WTC11 (cell line): ENCODE measurements at regions of chr2 and their contacts with region 1.

Region 1: GRCh38 chr2:176653479-176654443 is 384.5 kb downstream of the MTX2 start:
- DNase-seq: peak; percentile 74
- ATAC-seq: peak; percentile 98
- H3K4me3 Mint-ChIP-seq: 0 out of 2 replicates have a peak overlapping the region, but pooled peaks have one; percentile 21
- H3K27ac Mint-ChIP-seq: no peak overlapping the region
- H3K4me1 Mint-ChIP-seq: peaks cover 39% of the 10 kb centered on the region
- H3K27me3 Mint-ChIP-seq: peaks cover 16% of the 10 kb centered on the region
- CTCF ChIP-seq: peak; percentile 91

Region 2: GRCh38 chr2:175207741-175208438 is 1445.9 kb before region 1 on chr2:
- CTCF ChIA-PET with region 1: no interaction called
- POLR2A ChIA-PET with region 1: no interaction called
- DNase-seq: no peak
- ATAC-seq: no peak
- H3K4me3 Mint-ChIP-seq: no peak overlapping the region
- H3K27ac Mint-ChIP-seq: no peak overlapping the region
- H3K4me1 Mint-ChIP-seq: peaks cover 3% of the 10 kb centered on the region; the same call in 1 of the 2 replicates
- H3K27me3 Mint-ChIP-seq: no peaks in the 10 kb centered on the region
- CTCF ChIP-seq: no peak

Region 3: GRCh38 chr2:176126929-176127773 is 526.6 kb before region 1 on chr2:
- CTCF ChIA-PET with region 1: interaction called, 12 read pairs
- POLR2A ChIA-PET with region 1: no interaction called
- DNase-seq: peak; percentile 69
- ATAC-seq: no peak
- H3K4me3 Mint-ChIP-seq: no peak overlapping the region
- H3K27ac Mint-ChIP-seq: no peak overlapping the region
- H3K4me1 Mint-ChIP-seq: peaks cover 23% of the 10 kb centered on the region
- H3K27me3 Mint-ChIP-seq: peaks cover 98% of the 10 kb centered on the region
- CTCF ChIP-seq: peak; percentile 82

Region 4: GRCh38 chr2:176554101-176555048 is 99.4 kb before region 1 on chr2:
- CTCF ChIA-PET with region 1: interaction called, 14 read pairs
- POLR2A ChIA-PET with region 1: no interaction called
- DNase-seq: no peak
- ATAC-seq: peak; percentile 35; the same call in 1 of the 2 replicates
- H3K4me3 Mint-ChIP-seq: peak overlapping the region; percentile 61
- H3K27ac Mint-ChIP-seq: no peak overlapping the region
- H3K4me1 Mint-ChIP-seq: peaks cover 22% of the 10 kb centered on the region
- H3K27me3 Mint-ChIP-seq: peaks cover 43% of the 10 kb centered on the region
- CTCF ChIP-seq: no peak; the same call in 1 of the 2 replicates

Region 5: GRCh38 chr2:176643646-176644045 is 10.1 kb before region 1 on chr2:
- CTCF ChIA-PET with region 1: interaction called, 27 read pairs
- POLR2A ChIA-PET with region 1: no interaction called
- DNase-seq: peak; percentile 22
- ATAC-seq: peak; percentile 68
- H3K4me3 Mint-ChIP-seq: no peak overlapping the region
- H3K27ac Mint-ChIP-seq: no peak overlapping the region
- H3K4me1 Mint-ChIP-seq: peaks cover 44% of the 10 kb centered on the region
- H3K27me3 Mint-ChIP-seq: peaks cover 95% of the 10 kb centered on the region
- CTCF ChIP-seq: no peak

Region 6: GRCh38 chr2:176669398-176670174 is 15.8 kb after region 1 on chr2:
- CTCF ChIA-PET with region 1: interaction called, 31 read pairs
- POLR2A ChIA-PET with region 1: no interaction called
- DNase-seq: no peak
- ATAC-seq: peak; percentile 67
- H3K4me3 Mint-ChIP-seq: no peak overlapping the region
- H3K27ac Mint-ChIP-seq: no peak overlapping the region
- H3K4me1 Mint-ChIP-seq: peaks cover 20% of the 10 kb centered on the region
- H3K27me3 Mint-ChIP-seq: peaks cover 23% of the 10 kb centered on the region
- CTCF ChIP-seq: no peak

Region 7: GRCh38 chr2:176745543-176746200 is 91.9 kb after region 1 on chr2:
- CTCF ChIA-PET with region 1: interaction called, 13 read pairs
- POLR2A ChIA-PET with region 1: no interaction called
- DNase-seq: no peak
- ATAC-seq: peak; percentile 68
- H3K4me3 Mint-ChIP-seq: peak overlapping the region; percentile 49
- H3K27ac Mint-ChIP-seq: peak overlapping the region; percentile 95
- H3K4me1 Mint-ChIP-seq: peaks cover 58% of the 10 kb centered on the region
- H3K27me3 Mint-ChIP-seq: no peaks in the 10 kb centered on the region
- CTCF ChIP-seq: no peak